Common myeloid progenitor, CD34-positive (primary cell): ENCODE measurements at regions of chr14 and their contacts with region 1.

Region 1: DNA sequence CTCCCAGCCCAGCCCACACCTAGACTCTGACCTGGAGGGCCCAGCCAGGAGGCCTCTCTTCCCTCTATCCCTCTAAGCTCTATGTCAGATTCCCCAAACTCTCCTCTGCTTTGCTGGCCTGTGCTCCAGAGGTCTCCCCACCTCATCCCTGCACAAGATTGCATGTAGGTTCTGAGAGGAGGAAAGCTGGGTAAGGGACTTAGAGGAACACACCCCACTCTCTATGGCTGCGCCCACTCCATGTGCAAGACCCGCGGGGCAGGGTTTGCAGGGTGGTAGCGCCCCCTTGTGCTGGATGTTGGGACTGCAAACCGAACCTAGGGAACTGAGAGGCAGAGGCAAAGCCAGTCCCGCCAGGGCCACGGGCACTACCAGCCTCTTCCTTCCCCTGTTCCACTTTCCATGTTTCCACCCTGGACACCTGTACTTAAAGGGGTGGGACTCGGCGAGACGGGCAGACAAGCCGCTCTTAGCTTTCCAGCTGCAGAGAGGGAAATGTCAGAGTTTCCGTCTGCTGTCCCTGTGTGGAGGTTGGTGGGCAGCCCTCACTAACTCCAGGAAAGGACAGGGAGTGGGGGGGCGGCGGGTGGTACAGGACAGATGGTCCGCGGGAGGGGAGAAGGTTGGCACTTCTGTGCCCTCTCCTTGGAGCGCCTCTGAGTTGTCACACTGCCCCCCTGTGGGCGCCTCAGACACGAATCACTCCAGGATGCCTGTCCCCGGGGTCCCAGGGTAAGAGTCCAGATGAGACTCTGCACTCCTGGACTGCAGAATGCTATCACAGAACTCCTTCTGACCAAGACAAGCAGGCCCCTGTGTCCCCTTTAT is 16.8 kb downstream of the MMP14 start:
- DNase-seq: peak; percentile 84 to 88 (median 87)
- H3K4me3 ChIP-seq: peak overlapping the region in 6 of 7 experiments; percentile 23 to 74 (median 60)
- H3K27ac ChIP-seq: no peak overlapping the region
- H3K4me1 ChIP-seq: peaks cover 0 to 34% (median 29%) of the 10 kb centered on the region in 4 experiments
- H3K27me3 ChIP-seq: peaks cover 2 to 42% (median 5%) of the 10 kb centered on the region in 5 experiments

Region 2: DNA sequence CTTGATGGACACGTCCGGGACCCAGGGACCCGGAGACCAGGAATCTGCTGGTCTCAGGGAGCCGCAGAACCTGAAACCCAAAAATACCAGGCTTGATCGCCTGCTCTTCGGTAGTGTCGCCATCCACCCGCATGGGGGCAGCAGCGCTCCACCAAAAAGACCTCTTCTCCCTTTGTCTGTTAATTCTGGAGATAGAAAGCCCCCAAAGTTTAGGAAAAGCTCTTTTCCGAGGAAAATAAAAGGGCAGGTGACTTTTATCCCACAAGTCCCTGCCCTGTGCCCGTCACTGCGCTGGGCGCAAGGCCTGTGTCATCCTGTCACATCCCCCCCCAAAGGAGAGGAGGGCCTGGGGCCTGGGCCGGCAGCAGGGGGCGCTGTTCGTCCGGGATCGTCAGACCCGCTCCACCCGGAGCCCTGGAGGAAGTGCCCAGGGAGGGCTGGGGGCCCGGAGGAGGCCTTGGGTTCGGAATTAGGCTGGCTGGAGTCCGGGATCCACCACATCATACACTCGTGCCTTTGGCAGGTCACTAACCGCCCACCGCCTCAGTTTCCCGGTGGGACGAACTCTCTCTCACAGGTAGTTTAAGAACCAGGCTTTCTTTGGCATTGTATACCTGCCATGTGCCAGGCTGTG is 296.0 kb before region 1 on chr14:
- CTCF ChIA-PET with region 1: interaction called, 11 read pairs
- POLR2A ChIA-PET with region 1: interaction called, 4 read pairs
- DNase-seq: peak; percentile 84 to 88 (median 85)
- H3K4me3 ChIP-seq: peak overlapping the region in 6 of 7 experiments; percentile 0 to 76 (median 54)
- H3K27ac ChIP-seq: peak overlapping the region; percentile 61 to 84
- H3K4me1 ChIP-seq: peaks cover 30 to 78% (median 67%) of the 10 kb centered on the region in 4 experiments
- H3K27me3 ChIP-seq: no peaks in the 10 kb centered on the region

Region 3: GRCh38 chr14:22660654-22661053 is 192.5 kb before region 1 on chr14:
- CTCF ChIA-PET with region 1: interaction called, 13 read pairs
- POLR2A ChIA-PET with region 1: no interaction called
- DNase-seq: no peak
- H3K4me3 ChIP-seq: no peak overlapping the region
- H3K27ac ChIP-seq: no peak overlapping the region
- H3K4me1 ChIP-seq: no peaks in the 10 kb centered on the region
- H3K27me3 ChIP-seq: no peaks in the 10 kb centered on the region

Region 4: DNA sequence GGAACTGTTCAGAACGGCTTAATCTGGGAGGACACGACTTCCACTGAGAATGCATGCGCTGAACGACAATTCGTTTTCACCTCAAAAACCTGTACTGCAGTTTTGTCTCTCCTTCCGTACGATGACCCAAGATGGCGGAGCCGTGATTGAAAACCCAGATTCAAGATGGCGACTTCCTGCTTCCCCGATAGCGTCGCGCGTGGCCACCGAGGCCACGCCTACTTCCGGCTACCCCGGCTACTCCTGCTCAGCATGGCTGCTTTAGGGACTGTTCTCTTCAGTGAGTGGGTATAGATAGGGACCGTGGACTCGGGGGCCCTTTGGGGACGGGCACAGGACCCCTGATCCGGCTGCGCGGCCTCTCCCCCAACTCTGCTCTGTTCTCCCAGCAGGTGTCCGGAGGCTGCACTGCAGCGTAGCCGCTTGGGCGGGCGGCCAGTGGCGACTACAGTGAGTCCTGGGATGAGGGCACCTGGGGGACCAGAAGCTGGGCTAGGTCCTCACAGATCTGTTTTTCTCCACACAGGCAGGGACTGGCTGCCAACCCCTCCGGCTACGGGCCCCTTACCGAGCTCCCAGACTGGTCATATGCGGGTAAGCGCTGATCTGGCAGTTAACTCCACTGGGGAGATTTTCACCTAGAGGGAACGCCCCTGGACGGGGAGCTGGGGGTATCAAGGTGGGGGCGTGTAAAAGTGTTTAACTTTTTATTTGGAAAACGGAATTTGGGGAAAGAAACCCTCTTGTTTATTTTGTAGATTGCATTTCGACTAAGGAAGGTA is 23.3 kb before region 1 on chr14 and contains the start of gene MRPL52:
- CTCF ChIA-PET with region 1: interaction called, 707 read pairs
- POLR2A ChIA-PET with region 1: interaction called, 14 read pairs
- DNase-seq: peak; percentile 92 to 96 (median 96)
- H3K4me3 ChIP-seq: peak within 1 kb of the TSS; percentile 73 to 99 (median 92)
- H3K27ac ChIP-seq: peak within 1 kb of the TSS; percentile 61 to 89
- H3K4me1 ChIP-seq: peaks cover 10 to 17% (median 14%) of the 10 kb centered on the region in 4 experiments
- H3K27me3 ChIP-seq: no peaks in the 10 kb centered on the region

Region 5: GRCh38 chr14:22865424-22866405 is 12.6 kb after region 1 on chr14:
- CTCF ChIA-PET with region 1: interaction called, 44 read pairs
- POLR2A ChIA-PET with region 1: interaction called, 5 read pairs
- DNase-seq: no peak
- H3K4me3 ChIP-seq: no peak overlapping the region
- H3K27ac ChIP-seq: no peak overlapping the region
- H3K4me1 ChIP-seq: peaks cover 2 to 6% (median 3%) of the 10 kb centered on the region in 4 experiments
- H3K27me3 ChIP-seq: peaks cover 3 to 35% (median 10%) of the 10 kb centered on the region in 5 experiments

Region 6: GRCh38 chr14:22886500-22887259 is 33.5 kb after region 1 on chr14:
- CTCF ChIA-PET with region 1: interaction called, 14 read pairs
- POLR2A ChIA-PET with region 1: no interaction called
- DNase-seq: peak; percentile 67 to 87 (median 79)
- H3K4me3 ChIP-seq: peak overlapping the region in 3 of 7 experiments; percentile 44 to 51 (median 46)
- H3K27ac ChIP-seq: peak overlapping the region in 1 of 2 experiments; percentile 55
- H3K4me1 ChIP-seq: peaks cover 0 to 24% (median 15%) of the 10 kb centered on the region in 4 experiments
- H3K27me3 ChIP-seq: peaks cover 0 to 59% (median 17%) of the 10 kb centered on the region in 5 experiments

Region 7: DNA sequence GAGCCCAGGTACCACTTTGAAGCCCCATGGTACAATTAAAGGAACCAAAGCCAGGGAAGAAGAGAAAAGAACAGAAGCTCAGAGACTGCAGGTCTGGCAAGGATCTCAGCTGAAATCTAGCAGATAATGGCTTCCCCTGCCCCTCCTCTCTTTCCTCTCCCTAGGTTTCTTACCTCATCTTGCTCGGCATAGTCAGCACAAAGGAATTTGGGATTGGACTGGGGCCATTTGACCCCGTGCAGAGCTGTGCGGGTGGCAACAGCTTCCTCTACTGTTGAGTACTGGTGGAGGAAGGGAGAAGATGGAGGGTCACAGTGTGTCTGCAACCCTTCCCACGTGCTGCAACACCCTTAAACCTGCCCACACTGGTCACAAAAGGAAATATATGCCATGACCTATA is 208.8 kb after region 1 on chr14:
- CTCF ChIA-PET with region 1: no interaction called
- POLR2A ChIA-PET with region 1: no interaction called
- DNase-seq: no peak
- H3K4me3 ChIP-seq: no peak overlapping the region
- H3K27ac ChIP-seq: no peak overlapping the region
- H3K4me1 ChIP-seq: peaks cover 0 to 12% (median 9%) of the 10 kb centered on the region in 4 experiments
- H3K27me3 ChIP-seq: peaks cover 0 to 2% (median under 1%) of the 10 kb centered on the region in 5 experiments